SK-N-SH (cell line): ENCODE measurements at regions of chr2 and their contacts with region 1.

Region 1: DNA sequence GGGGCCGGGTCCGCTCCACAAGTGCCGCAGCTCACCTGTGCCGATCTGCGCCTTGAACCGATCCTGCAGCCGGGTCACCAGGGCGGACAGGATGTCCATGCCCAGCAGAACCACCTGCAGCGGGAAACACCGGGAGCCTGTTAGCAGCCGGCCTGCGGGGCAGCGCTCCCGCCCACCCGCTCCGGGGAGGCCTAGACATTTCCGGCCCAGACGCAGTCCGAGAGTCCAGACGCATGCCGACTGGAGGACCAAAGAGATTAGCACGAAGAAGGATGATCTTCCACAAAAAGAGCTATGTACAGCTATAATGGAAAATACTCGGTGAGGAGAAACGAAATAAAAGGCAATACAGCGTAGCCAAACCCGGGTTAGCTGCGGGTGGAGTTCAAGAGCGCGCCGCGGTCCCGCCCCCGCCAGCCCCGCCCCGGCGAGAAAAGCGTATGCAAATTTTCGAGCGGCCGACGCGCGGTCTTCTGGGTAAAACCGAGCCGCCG is 421 bp upstream of the RNU4ATAC start:
- DNase-seq: peak; percentile 87
- H3K4me3 ChIP-seq: peak overlapping the region; percentile 81 to 83
- H3K27ac ChIP-seq: peak overlapping the region; percentile 95 to 100
- H3K4me1 ChIP-seq: peaks cover 19 to 28% of the 10 kb centered on the region in 2 experiments; a peak in 3 of 4 replicates
- H3K27me3 ChIP-seq: no peaks in the 10 kb centered on the region
- CTCF ChIP-seq: no peak
- EP300 ChIP-seq: no peak
- RAD21 ChIP-seq: no peak

Region 2: GRCh38 chr2:121545257-121545656 is 15.0 kb after region 1 on chr2:
- CTCF ChIA-PET with region 1: interaction called, 12 read pairs
- POLR2A ChIA-PET with region 1: interaction called, 6 read pairs
- DNase-seq: no peak
- H3K4me3 ChIP-seq: no peak overlapping the region
- H3K27ac ChIP-seq: no peak overlapping the region
- H3K4me1 ChIP-seq: no peaks in the 10 kb centered on the region; a peak in 1 of 4 replicates
- H3K27me3 ChIP-seq: no peaks in the 10 kb centered on the region
- CTCF ChIP-seq: no peak
- EP300 ChIP-seq: no peak
- RAD21 ChIP-seq: no peak

Region 3: GRCh38 chr2:121561617-121562268 is 31.5 kb after region 1 on chr2:
- CTCF ChIA-PET with region 1: interaction called, 11 read pairs
- POLR2A ChIA-PET with region 1: interaction called, 8 read pairs
- DNase-seq: no peak
- H3K4me3 ChIP-seq: no peak overlapping the region; a peak in 1 of 4 replicates
- H3K27ac ChIP-seq: peak overlapping the region in 1 of 2 experiments; percentile 53; a peak in 2 of 4 replicates
- H3K4me1 ChIP-seq: peaks cover 19% of the 10 kb centered on the region in 2 experiments; a peak in 3 of 4 replicates
- H3K27me3 ChIP-seq: no peaks in the 10 kb centered on the region
- CTCF ChIP-seq: no peak
- EP300 ChIP-seq: 0 out of 4 replicates have a peak, but pooled peaks of 1 of the 2 experiments have one; percentile 18
- RAD21 ChIP-seq: no peak

Region 4: DNA sequence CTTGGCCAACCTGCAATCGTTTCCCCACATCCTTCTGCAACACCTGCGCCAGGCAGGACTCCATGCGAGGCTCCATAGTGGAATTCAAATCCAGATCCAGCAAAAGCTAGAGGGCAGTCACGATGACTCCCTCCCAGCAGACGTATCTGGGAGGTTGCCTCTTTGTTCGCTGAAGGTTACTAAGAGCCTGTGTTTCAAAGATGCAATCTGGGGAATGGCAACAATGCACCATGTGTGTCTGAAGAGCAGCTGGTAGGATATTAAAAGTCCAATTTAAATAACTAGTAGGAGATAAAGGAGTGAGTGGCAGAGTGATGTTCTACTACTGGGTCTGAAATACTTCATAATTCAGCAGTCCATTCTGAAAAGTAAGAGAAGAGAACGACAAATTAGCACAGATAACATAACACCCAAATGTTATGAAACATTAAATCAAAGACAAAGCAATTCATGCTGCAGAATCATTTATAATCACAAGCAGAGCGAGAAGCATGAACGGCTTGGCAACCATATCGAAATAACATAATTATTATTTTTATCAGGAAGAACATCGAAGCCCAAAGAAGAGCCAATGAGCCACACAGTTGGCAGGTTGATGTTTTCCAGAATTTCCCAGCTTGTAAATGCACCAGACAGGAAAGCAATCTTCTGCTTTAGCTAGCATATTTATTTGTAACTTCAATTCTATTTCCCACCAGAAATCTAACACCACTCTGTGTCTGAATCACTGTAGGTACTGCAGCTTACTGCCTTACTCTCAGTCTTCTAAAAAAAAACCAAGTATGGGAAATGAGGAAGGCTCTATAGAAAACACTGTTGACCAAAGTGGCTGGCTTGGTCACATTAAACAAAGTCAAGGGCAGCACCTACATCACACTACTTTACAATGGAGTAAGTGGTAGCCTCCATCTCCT is 75.8 kb after region 1 on chr2:
- CTCF ChIA-PET with region 1: interaction called, 10 read pairs
- POLR2A ChIA-PET with region 1: interaction called, 10 read pairs
- DNase-seq: peak; percentile 74
- H3K4me3 ChIP-seq: no peak overlapping the region; a peak in 1 of 4 replicates
- H3K27ac ChIP-seq: peak overlapping the region; percentile 17 to 84; a peak in 3 of 4 replicates
- H3K4me1 ChIP-seq: peaks cover 0 to 21% of the 10 kb centered on the region in 2 experiments; a peak in 3 of 4 replicates
- H3K27me3 ChIP-seq: no peaks in the 10 kb centered on the region
- CTCF ChIP-seq: no peak
- EP300 ChIP-seq: peak in 1 of 2 experiments; percentile 38; a peak in 1 of 4 replicates
- RAD21 ChIP-seq: peak; percentile 50

Region 5: DNA sequence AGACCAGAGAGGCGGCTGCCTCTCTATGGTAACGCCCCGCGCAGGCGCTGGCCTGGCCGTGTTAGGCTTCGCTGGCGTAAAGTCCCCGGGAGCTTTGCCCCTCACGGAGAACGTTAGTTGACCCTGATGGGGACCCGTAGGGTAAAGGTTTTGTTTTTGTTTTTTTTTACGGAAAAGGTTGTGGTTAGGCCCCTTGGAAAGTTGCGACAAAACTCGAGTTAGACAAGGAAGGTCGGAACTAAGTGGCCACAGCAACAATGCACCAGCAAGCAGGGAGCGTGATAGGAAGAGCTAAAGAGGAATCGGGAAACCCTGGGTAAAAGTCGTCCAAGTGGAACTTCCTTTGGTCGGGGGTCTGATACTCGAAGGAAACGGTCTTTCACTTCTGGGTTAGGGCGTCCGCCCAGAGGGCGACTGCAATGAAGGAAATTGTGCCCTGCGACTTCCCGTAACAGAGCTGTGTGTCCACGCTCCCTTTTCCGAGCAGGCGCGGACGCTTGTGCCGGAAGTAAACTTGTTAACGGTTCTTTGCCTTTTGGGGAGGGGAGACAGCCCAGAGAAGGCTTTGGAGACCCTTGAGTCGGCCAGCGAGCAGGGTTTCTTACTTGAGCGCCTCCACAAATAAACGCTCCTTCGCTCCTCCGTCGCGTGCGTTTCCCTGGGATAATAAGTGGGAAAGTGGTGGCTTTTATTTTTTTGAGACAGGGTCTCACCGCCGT is 119.5 kb after region 1 on chr2:
- CTCF ChIA-PET with region 1: interaction called, 6 read pairs
- POLR2A ChIA-PET with region 1: interaction called, 38 read pairs
- DNase-seq: peak; percentile 76
- H3K4me3 ChIP-seq: peak overlapping the region; percentile 78 to 86
- H3K27ac ChIP-seq: peak overlapping the region; percentile 95 to 98
- H3K4me1 ChIP-seq: peaks cover 4 to 5% of the 10 kb centered on the region in 2 experiments; a peak in 2 of 4 replicates
- H3K27me3 ChIP-seq: no peaks in the 10 kb centered on the region
- CTCF ChIP-seq: no peak
- EP300 ChIP-seq: peak in 1 of 2 experiments; percentile 28; a peak in 2 of 4 replicates
- RAD21 ChIP-seq: no peak; the same call in 1 of the 2 replicates

Region 6: DNA sequence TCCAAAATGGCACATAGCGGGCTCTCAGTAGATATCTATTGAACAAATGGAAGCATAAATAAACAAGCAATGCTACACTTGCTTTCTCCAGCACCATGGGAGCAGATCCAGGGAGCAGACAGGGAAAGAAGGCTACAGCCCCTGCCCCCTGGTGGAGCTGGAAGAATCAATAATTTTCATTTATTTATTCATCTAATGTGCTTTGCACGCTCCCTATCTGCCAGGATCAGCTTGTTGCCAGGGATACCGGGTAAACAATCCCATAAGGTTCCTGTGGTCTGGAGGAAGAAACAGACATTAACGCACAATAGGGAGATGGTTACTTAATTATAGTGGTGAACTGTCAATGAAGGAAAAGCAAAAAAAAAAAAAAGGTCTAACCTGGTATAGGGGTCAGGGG is 159.1 kb after region 1 on chr2:
- CTCF ChIA-PET with region 1: interaction called, 10 read pairs
- POLR2A ChIA-PET with region 1: interaction called, 7 read pairs
- DNase-seq: peak; percentile 87
- H3K4me3 ChIP-seq: no peak overlapping the region
- H3K27ac ChIP-seq: peak overlapping the region in 1 of 2 experiments; percentile 30; a peak in 1 of 4 replicates
- H3K4me1 ChIP-seq: peaks cover 0 to 6% of the 10 kb centered on the region in 2 experiments; a peak in 1 of 4 replicates
- H3K27me3 ChIP-seq: no peaks in the 10 kb centered on the region
- CTCF ChIP-seq: peak; percentile 54
- EP300 ChIP-seq: peak in 1 of 2 experiments; percentile 48; a peak in 1 of 4 replicates
- RAD21 ChIP-seq: peak; percentile 74

Region 7: GRCh38 chr2:121722479-121722878 is 192.2 kb after region 1 on chr2:
- CTCF ChIA-PET with region 1: interaction called, 19 read pairs
- POLR2A ChIA-PET with region 1: interaction called, 10 read pairs
- DNase-seq: no peak
- H3K4me3 ChIP-seq: peak overlapping the region in 1 of 2 experiments; percentile 9; a peak in 1 of 4 replicates
- H3K27ac ChIP-seq: peak overlapping the region in 1 of 2 experiments; percentile 64; a peak in 2 of 4 replicates
- H3K4me1 ChIP-seq: no peaks in the 10 kb centered on the region
- H3K27me3 ChIP-seq: no peaks in the 10 kb centered on the region
- CTCF ChIP-seq: no peak
- EP300 ChIP-seq: no peak
- RAD21 ChIP-seq: no peak